Posterior vena cava (tissue), 2 donors: ENCODE measurements at regions of chr9 and their contacts with region 1.

Region 1: DNA sequence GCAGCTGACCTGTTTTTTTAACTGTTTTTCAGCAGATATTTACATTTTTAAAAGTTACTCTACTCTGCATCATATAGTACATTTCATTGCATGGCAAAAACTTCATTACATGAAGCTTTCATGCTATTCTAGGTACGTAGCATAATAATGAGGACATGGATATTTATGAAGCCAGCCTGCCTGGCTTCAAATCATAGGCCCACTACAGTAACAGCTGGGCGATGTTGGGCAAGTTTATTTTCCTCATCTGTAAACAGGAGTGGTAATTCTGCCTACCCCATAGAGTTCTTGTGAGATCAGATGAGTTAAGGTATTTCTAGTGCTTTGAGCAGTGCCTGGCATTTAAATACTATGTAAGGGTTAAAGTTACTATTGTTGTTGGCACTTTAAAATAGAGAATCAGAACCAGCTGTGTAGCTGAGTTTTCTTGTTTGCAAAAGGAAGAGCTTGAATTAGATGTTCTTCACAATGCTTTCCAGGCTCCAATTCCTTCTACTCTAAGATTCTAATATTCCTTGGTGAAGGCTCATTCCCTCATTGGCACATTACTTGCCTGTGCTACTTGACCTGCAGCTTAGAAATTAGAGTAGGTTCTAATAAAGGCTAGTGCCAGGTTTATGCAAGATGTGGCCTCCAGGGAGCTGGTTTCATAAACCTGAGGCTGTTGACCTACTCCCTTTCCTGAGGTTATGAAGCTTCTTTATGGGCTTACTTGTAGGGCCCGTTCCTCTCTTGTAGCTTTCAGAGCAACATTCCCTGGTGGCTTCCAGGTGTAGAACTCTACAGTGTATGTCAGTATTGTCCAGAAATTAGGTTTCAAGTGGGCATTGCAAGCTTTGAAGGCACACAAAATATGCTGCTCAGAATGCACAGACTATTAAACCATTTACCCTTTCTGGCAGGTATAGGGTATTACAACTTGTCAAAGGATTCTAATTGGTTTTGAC is 14.5 kb downstream of the ANP32B start:
- DNase-seq: no peak

Region 2: DNA sequence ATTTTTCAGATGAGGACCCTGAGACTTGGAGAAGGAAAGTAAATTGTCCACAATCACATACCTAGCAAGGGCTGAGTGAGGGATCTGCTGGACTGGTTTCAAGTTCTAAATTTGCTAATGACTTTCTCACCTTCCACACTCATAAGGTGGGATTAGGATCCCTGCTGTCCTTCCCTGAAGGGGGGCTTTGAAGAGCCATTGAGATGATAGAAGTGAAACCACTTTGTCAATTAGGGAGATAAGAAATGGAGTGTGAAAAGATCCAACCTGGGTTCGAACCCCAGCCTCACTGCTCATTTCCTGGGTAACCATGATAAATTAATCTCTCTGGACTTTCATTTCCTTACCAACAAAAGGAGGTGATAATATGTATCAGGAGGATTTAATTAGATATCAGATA is 177.2 kb before region 1 on chr9:
- intact Hi-C with region 1: no loop called
- DNase-seq: no peak

Region 3: DNA sequence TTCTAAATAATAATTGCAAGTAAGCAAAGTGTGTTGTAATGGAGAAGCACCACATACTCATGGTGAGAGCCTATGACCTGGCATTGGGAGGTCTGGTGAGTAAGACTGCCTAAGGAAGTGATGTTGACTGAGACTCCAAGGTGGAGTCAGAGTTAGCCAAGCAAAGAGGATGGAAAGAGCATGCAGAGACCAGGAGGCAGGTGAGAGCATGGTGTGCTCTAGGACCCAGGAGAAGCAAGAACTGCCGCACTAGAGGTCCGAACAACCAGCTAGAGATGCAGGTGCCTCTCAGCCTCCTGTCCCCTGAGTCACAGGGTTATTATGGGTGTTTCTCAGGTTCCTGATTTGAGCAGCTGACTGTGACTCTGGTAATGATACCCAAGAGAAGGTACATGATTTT is 12.8 kb after region 1 on chr9:
- intact Hi-C with region 1: loop called in 1 of 2 experiments (anchors 1 kb)
- DNase-seq: no peak